CD4-positive, alpha-beta memory T cell (primary cell): ENCODE measurements at regions of chr18 and their contacts with region 1.

Region 1: GRCh38 chr18:14026199-14026598 is 106.0 kb downstream of the ZNF519 start:
- DNase-seq: no peak
- H3K4me3 ChIP-seq: no peak overlapping the region
- H3K4me3 Mint-ChIP-seq: no peak overlapping the region
- H3K27ac ChIP-seq: no peak overlapping the region
- H3K27ac Mint-ChIP-seq: no peak overlapping the region
- H3K4me1 ChIP-seq: no peaks in the 10 kb centered on the region
- H3K4me1 Mint-ChIP-seq: no peaks in the 10 kb centered on the region
- H3K27me3 ChIP-seq: no peaks in the 10 kb centered on the region
- H3K27me3 Mint-ChIP-seq: peaks cover 5 to 17% of the 10 kb centered on the region in 2 donors

Region 2: GRCh38 chr18:13235981-13236380 is 790.2 kb before region 1 on chr18:
- CTCF ChIA-PET with region 1: no interaction called
- POLR2A ChIA-PET with region 1: no interaction called
- intact Hi-C with region 1: no loop called
- DNase-seq: no peak
- H3K4me3 ChIP-seq: no peak overlapping the region
- H3K4me3 Mint-ChIP-seq: no peak overlapping the region
- H3K27ac ChIP-seq: no peak overlapping the region
- H3K27ac Mint-ChIP-seq: no peak overlapping the region
- H3K4me1 ChIP-seq: no peaks in the 10 kb centered on the region
- H3K4me1 Mint-ChIP-seq: no peaks in the 10 kb centered on the region
- H3K27me3 ChIP-seq: no peaks in the 10 kb centered on the region
- H3K27me3 Mint-ChIP-seq: no peaks in the 10 kb centered on the region

Region 3: DNA sequence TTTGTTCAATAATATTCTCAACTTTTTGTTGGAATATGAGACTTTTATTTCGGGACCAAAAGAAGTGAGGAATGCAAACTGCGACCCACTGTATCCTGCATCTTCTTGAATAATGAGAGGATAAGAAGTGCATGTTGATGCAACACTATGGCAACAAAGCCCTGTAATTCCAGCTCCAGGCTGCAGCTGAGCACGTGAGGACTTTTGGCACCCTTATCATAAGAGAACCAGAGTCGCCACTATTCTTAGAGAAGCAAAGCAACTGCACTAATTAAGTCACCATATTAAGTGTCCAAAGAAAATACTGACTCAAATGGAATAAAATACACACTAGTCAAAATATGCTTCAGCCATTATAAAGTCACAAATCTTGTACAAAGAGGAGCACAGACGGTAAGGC is 365.7 kb before region 1 on chr18:
- CTCF ChIA-PET with region 1: no interaction called
- POLR2A ChIA-PET with region 1: no interaction called
- intact Hi-C with region 1: no loop called
- DNase-seq: no peak
- H3K4me3 ChIP-seq: no peak overlapping the region
- H3K4me3 Mint-ChIP-seq: no peak overlapping the region
- H3K27ac ChIP-seq: no peak overlapping the region
- H3K27ac Mint-ChIP-seq: no peak overlapping the region
- H3K4me1 ChIP-seq: no peaks in the 10 kb centered on the region
- H3K4me1 Mint-ChIP-seq: no peaks in the 10 kb centered on the region
- H3K27me3 ChIP-seq: no peaks in the 10 kb centered on the region
- H3K27me3 Mint-ChIP-seq: no peaks in the 10 kb centered on the region

Region 4: DNA sequence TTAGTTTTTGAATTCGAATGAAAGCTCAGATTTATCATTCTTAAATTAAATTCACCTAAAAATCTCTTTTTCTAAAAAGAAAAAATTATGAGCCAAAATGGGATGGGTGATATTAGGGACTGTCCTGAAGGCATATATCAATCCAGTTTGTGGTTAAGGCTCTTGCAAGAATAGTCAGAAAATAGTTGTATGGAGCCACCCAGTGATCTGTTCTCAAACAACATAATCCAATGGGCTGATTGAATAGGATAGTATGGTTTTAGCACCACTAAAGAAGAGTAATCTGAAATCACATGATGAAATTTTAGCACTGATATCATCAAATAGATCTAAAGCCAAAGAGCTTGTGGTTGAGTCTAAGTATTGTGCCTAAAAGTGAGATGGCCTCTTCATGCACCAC is 17.7 kb after region 1 on chr18:
- CTCF ChIA-PET with region 1: no interaction called
- POLR2A ChIA-PET with region 1: no interaction called
- intact Hi-C with region 1: loop called (anchors 2 kb)
- DNase-seq: no peak
- H3K4me3 ChIP-seq: no peak overlapping the region
- H3K4me3 Mint-ChIP-seq: no peak overlapping the region
- H3K27ac ChIP-seq: no peak overlapping the region
- H3K27ac Mint-ChIP-seq: no peak overlapping the region
- H3K4me1 ChIP-seq: no peaks in the 10 kb centered on the region
- H3K4me1 Mint-ChIP-seq: no peaks in the 10 kb centered on the region
- H3K27me3 ChIP-seq: no peaks in the 10 kb centered on the region
- H3K27me3 Mint-ChIP-seq: no peaks in the 10 kb centered on the region

Region 5: GRCh38 chr18:14074187-14074586 is 48.0 kb after region 1 on chr18:
- CTCF ChIA-PET with region 1: no interaction called
- POLR2A ChIA-PET with region 1: no interaction called
- intact Hi-C with region 1: loop called (anchors 10 kb)
- DNase-seq: no peak
- H3K4me3 ChIP-seq: no peak overlapping the region
- H3K4me3 Mint-ChIP-seq: no peak overlapping the region
- H3K27ac ChIP-seq: no peak overlapping the region
- H3K27ac Mint-ChIP-seq: no peak overlapping the region
- H3K4me1 ChIP-seq: no peaks in the 10 kb centered on the region
- H3K4me1 Mint-ChIP-seq: no peaks in the 10 kb centered on the region
- H3K27me3 ChIP-seq: no peaks in the 10 kb centered on the region
- H3K27me3 Mint-ChIP-seq: no peaks in the 10 kb centered on the region

Region 6: DNA sequence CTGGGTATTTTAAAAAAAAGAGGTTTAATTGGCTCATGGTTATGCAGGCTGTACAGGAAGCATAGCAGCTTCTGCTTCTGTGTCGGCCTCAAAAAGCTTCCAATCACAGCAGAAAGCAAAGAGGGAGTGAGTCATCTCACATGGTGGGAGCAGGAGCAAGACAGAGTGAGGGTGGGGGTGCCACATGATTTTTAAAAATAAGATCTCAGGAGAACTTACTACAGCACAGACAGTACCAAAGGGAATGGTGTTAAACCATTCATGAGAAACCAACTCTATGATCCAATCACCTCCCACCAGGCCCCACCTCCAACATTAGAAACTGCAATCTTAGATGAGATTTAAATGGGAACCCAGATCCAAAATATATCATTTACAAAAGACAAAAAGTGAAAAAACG is 91.4 kb after region 1 on chr18:
- CTCF ChIA-PET with region 1: no interaction called
- POLR2A ChIA-PET with region 1: no interaction called
- intact Hi-C with region 1: no loop called
- DNase-seq: no peak
- H3K4me3 ChIP-seq: no peak overlapping the region
- H3K4me3 Mint-ChIP-seq: no peak overlapping the region
- H3K27ac ChIP-seq: no peak overlapping the region
- H3K27ac Mint-ChIP-seq: no peak overlapping the region
- H3K4me1 ChIP-seq: no peaks in the 10 kb centered on the region
- H3K4me1 Mint-ChIP-seq: peaks cover 0 to 4% (median 2%) of the 10 kb centered on the region in 4 donors
- H3K27me3 ChIP-seq: no peaks in the 10 kb centered on the region
- H3K27me3 Mint-ChIP-seq: no peaks in the 10 kb centered on the region